ENCODE measurements at regions of chr1 and their contacts with region 1.

Region 1: DNA sequence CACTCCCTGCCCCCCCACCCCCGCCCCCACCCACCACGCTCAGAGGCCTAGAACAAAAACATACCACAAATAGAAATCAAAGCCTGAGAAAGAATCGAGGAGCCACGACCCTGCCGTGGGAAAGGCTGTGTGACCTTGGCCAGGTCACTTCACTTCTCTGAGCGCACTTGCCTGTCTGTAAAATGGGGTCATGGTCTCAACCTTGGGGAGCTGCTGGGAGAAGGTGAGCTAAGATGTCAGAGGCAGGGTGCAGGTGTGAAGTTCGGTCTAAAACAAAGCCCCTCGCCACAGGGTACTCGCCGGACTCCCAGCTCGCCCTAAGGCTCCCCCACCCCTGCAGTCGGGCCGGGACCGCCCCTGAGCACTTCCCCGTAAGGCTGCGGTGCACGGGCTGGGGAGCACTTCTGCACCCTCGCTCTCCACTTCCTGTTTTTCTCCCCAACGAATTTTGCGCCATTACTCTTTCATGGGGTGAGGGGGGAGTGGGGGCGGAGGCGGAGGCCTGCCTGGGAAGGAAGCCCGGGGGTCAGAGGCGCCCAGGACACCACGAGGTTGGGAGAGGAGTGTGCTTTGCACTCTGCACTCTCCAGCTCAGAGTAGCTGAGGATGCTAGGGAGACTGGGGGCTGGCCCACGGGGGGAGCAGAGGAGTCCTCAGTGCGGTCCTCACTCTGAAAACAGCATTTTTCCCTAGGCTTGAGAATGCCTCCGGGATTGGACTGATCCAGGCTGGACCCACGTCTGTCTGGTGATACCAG is 21.9 kb upstream of the PIK3CD start:
- DNase-seq: peak; percentile 71
- ATAC-seq: peak; percentile 45
- H3K4me3 ChIP-seq: peak overlapping the region; percentile 86
- H3K27ac ChIP-seq: peak overlapping the region; percentile 98
- H3K4me1 ChIP-seq: peaks cover 37% of the 10 kb centered on the region
- H3K27me3 ChIP-seq: no peaks in the 10 kb centered on the region
- CTCF ChIP-seq: no peak
- EP300 ChIP-seq: peak; percentile 57 to 64; a peak in 1 of 4 replicates
- POLR2A ChIP-seq: peak; percentile 76
- RAD21 ChIP-seq: no peak

Region 2: GRCh38 chr1:9593492-9594465 is 35.8 kb before region 1 on chr1:
- CTCF ChIA-PET with region 1: interaction called, 6 read pairs
- POLR2A ChIA-PET with region 1: interaction called, 5 read pairs
- RAD21 ChIA-PET with region 1: interaction called, 13 read pairs
- SMC1A ChIA-PET with region 1: interaction called, 4 read pairs
- in situ Hi-C with region 1: no loop called
- intact Hi-C with region 1: no loop called
- DNase-seq: peak; percentile 30
- ATAC-seq: peak; percentile 70
- H3K4me3 ChIP-seq: peak overlapping the region; percentile 34
- H3K27ac ChIP-seq: peak overlapping the region; percentile 58
- H3K4me1 ChIP-seq: peaks cover 28% of the 10 kb centered on the region
- H3K27me3 ChIP-seq: no peaks in the 10 kb centered on the region
- CTCF ChIP-seq: no peak
- EP300 ChIP-seq: no peak
- POLR2A ChIP-seq: no peak
- RAD21 ChIP-seq: no peak

Region 3: GRCh38 chr1:9651565-9652378 is 22.1 kb after region 1 on chr1 and contains the start of gene PIK3CD:
- CTCF ChIA-PET with region 1: interaction called, 203 read pairs
- POLR2A ChIA-PET with region 1: interaction called, 284 read pairs
- RAD21 ChIA-PET with region 1: interaction called, 336 read pairs
- SMC1A ChIA-PET with region 1: interaction called, 215 read pairs
- in situ Hi-C with region 1: no loop called
- intact Hi-C with region 1: loop called (anchors 1 kb)
- DNase-seq: no peak
- ATAC-seq: peak; percentile 47
- H3K4me3 ChIP-seq: peak within 1 kb of the TSS; percentile 86
- H3K27ac ChIP-seq: peak within 1 kb of the TSS; percentile 89
- H3K4me1 ChIP-seq: peaks cover 8% of the 10 kb centered on the region
- H3K27me3 ChIP-seq: no peaks in the 10 kb centered on the region
- CTCF ChIP-seq: no peak
- EP300 ChIP-seq: no peak
- POLR2A ChIP-seq: peak; percentile 79
- RAD21 ChIP-seq: no peak
- polyA plus RNA-seq, gene PIK3CD: 7.0 to 12.7 TPM

Region 4: DNA sequence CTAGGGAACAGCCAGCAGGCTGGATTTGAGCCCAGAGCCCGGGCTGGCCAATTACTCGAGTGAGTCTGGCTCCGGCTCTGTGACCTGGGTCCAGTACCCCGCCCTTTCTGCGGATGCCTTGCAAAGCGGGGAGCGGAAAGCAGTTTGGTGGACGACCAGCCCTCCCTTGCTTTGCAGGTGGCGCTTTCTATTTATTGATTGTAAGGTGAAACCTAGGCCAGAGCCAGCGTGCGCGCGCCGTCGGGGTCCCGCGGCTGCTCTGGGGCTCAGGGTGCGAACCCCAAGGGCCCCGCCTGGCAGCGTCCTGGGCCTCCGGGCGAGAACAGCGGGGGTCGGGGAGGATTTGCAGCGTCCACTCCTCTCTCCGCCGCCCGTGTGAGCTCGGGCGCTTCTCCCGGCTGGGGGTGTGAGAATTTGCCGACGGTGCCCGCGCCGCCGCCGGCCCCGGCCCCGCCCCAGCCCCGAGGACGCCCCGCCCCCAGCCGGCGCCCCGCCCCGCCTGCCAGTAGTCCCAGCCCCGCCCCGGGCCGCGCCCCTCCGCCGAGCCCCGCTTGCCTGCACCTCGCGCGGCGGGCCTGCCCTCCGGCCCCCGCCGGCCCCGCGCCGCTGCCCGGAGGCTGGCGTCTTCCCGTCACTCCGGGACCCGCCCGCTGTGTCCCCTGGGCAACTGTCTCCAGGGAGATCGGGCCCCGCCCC is 59.5 kb after region 1 on chr1:
- CTCF ChIA-PET with region 1: interaction called, 50 read pairs
- POLR2A ChIA-PET with region 1: interaction called, 28 read pairs
- RAD21 ChIA-PET with region 1: interaction called, 37 read pairs
- SMC1A ChIA-PET with region 1: interaction called, 44 read pairs
- in situ Hi-C with region 1: no loop called
- intact Hi-C with region 1: loop called (anchors 2 kb)
- DNase-seq: no peak
- ATAC-seq: peak; percentile 73
- H3K4me3 ChIP-seq: peak overlapping the region; percentile 96
- H3K27ac ChIP-seq: peak overlapping the region; percentile 82
- H3K4me1 ChIP-seq: peaks cover 27% of the 10 kb centered on the region
- H3K27me3 ChIP-seq: no peaks in the 10 kb centered on the region
- CTCF ChIP-seq: no peak
- EP300 ChIP-seq: no peak
- POLR2A ChIP-seq: peak; percentile 45; the same call in 1 of the 2 replicates
- RAD21 ChIP-seq: no peak

Region 5: DNA sequence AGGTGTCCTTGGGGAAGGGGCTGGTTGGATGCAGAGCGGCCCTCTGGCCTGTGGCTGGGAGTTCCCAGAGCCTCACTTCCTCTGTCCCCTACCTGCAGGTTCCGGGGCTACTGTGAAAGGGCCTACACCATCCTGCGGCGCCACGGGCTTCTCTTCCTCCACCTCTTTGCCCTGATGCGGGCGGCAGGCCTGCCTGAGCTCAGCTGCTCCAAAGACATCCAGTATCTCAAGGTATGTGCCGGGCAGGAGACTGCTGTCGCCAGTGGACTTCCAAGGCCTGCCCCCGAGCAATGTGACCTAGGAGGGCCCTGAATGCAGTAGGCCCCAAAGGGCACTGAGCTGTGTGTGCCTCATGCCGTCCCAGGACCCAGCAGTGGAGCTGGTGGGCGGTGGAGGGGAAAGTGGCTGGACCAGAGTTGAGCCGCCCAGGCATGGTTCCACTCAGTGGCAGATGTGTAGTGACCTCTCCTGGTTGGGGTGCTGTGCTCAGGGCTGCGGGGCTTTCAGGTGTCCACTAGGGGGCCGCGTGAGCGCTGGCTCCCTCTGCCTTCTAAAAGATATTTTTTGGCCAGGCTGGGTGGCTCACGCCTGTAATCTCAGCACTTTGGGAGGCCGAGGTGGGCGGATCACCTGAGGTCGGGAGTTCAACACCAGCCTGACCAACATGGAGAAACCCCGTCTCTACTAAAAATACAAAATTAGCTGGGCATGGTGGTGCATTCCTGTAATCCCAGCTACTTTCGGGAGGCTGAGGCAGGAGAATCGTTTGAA is 95.3 kb after region 1 on chr1:
- CTCF ChIA-PET with region 1: interaction called, 16 read pairs
- POLR2A ChIA-PET with region 1: no interaction called
- RAD21 ChIA-PET with region 1: interaction called, 20 read pairs
- SMC1A ChIA-PET with region 1: interaction called, 7 read pairs
- in situ Hi-C with region 1: no loop called
- intact Hi-C with region 1: loop called (anchors 2 kb)
- DNase-seq: no peak
- ATAC-seq: peak; percentile 91
- H3K4me3 ChIP-seq: no peak overlapping the region
- H3K27ac ChIP-seq: no peak overlapping the region
- H3K4me1 ChIP-seq: no peaks in the 10 kb centered on the region
- H3K27me3 ChIP-seq: no peaks in the 10 kb centered on the region
- CTCF ChIP-seq: peak; percentile 92 to 96 (median 95)
- EP300 ChIP-seq: no peak
- POLR2A ChIP-seq: no peak; the same call in 1 of the 2 replicates
- RAD21 ChIP-seq: peak; percentile 61

Region 6: DNA sequence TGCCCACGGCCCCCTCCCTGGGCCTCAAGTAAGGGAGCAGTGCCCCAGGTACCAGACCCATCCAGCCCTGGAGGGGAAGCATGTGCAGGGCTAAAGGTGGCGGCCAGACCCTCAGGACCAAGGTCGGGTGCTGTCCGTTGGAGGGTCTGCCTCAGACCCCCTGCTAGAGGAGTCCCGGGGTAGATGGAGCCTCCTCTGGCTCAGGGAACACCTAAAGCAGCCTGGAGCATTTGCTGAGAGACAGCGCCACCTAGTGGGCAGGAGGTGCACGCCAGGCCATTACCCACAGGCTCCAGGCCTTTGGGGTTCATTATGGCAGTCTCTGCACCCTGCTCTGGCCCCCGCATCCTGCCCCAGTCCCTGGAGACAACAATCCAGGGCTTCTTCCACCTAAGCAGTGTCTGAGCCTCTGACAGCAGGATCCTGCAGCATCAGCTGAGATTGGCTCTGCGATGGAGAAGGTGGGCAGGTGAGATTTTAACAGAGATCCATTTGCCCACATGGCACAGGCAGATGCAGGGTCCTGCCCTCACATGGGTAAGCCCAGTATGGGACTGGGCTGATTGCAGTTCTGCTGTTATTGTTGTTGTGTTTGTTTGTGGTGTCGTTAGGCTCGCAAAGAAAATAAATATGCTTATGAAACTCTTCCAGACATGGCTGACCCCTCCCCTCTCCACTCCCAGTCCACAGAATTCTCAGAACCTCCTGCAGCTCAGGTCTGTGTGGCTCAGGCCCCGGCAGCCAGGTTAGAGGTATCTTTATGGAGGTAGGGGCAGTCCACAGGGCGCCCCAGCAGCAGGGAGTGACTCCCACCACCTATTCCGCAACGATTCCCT is 238.0 kb after region 1 on chr1:
- CTCF ChIA-PET with region 1: interaction called, 43 read pairs
- POLR2A ChIA-PET with region 1: no interaction called
- RAD21 ChIA-PET with region 1: interaction called, 9 read pairs
- SMC1A ChIA-PET with region 1: interaction called, 8 read pairs
- in situ Hi-C with region 1: loop called (anchors 5 kb)
- intact Hi-C with region 1: loop called (anchors 2 kb)
- DNase-seq: peak; percentile 36
- ATAC-seq: peak; percentile 90
- H3K4me3 ChIP-seq: no peak overlapping the region
- H3K27ac ChIP-seq: no peak overlapping the region
- H3K4me1 ChIP-seq: peaks cover 22% of the 10 kb centered on the region
- H3K27me3 ChIP-seq: no peaks in the 10 kb centered on the region
- CTCF ChIP-seq: peak; percentile 94 to 98 (median 98); a peak in 5 of 6 replicates
- EP300 ChIP-seq: no peak
- POLR2A ChIP-seq: no peak
- RAD21 ChIP-seq: peak; percentile 97

Measured in GM12878 (cell line).